CD4-positive, alpha-beta T cell (primary cell): ENCODE measurements at regions of chr6 and their contacts with region 1.

Region 1: GRCh38 chr6:79672631-79673111 is 41.5 kb downstream of the SH3BGRL2 start:
- DNase-seq: peak in 3 of 14 experiments; percentile 20 to 24 (median 23)
- ATAC-seq: peak; percentile 31
- H3K4me3 ChIP-seq: no peak overlapping the region
- H3K4me3 Mint-ChIP-seq: no peak overlapping the region
- H3K27ac ChIP-seq: no peak overlapping the region
- H3K27ac Mint-ChIP-seq: peak overlapping the region; percentile 78
- H3K4me1 ChIP-seq: peaks cover 14% of the 10 kb centered on the region
- H3K4me1 Mint-ChIP-seq: peaks cover 49% of the 10 kb centered on the region
- H3K27me3 ChIP-seq: no peaks in the 10 kb centered on the region
- H3K27me3 Mint-ChIP-seq: no peaks in the 10 kb centered on the region
- CTCF ChIP-seq: peak; percentile 49

Region 2: DNA sequence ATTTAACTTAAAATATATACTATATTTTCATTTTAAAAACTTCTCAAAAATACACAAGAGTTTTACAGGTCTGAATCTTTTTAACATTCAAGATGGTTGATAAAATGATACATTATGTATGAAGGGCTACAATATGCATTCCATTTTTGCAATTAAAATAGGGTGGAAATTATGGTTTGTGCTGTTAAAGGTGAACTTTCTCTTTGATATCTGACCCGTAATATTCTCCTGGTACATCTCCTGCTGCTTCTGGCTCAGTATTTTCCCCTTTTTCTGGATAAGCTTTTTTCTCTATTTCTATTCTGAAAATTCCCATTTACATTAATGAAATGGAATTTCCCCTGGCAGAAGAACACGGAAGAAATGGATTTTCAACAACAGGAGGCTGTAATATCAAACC is 108.0 kb before region 1 on chr6:
- CTCF ChIA-PET with region 1: no interaction called
- POLR2A ChIA-PET with region 1: no interaction called
- intact Hi-C with region 1: loop called in 1 of 2 experiments (anchors 5 kb)
- DNase-seq: no peak
- ATAC-seq: no peak
- H3K4me3 ChIP-seq: no peak overlapping the region
- H3K4me3 Mint-ChIP-seq: no peak overlapping the region
- H3K27ac ChIP-seq: no peak overlapping the region
- H3K27ac Mint-ChIP-seq: no peak overlapping the region
- H3K4me1 ChIP-seq: no peaks in the 10 kb centered on the region
- H3K4me1 Mint-ChIP-seq: no peaks in the 10 kb centered on the region
- H3K27me3 ChIP-seq: no peaks in the 10 kb centered on the region
- H3K27me3 Mint-ChIP-seq: no peaks in the 10 kb centered on the region
- CTCF ChIP-seq: no peak

Region 3: DNA sequence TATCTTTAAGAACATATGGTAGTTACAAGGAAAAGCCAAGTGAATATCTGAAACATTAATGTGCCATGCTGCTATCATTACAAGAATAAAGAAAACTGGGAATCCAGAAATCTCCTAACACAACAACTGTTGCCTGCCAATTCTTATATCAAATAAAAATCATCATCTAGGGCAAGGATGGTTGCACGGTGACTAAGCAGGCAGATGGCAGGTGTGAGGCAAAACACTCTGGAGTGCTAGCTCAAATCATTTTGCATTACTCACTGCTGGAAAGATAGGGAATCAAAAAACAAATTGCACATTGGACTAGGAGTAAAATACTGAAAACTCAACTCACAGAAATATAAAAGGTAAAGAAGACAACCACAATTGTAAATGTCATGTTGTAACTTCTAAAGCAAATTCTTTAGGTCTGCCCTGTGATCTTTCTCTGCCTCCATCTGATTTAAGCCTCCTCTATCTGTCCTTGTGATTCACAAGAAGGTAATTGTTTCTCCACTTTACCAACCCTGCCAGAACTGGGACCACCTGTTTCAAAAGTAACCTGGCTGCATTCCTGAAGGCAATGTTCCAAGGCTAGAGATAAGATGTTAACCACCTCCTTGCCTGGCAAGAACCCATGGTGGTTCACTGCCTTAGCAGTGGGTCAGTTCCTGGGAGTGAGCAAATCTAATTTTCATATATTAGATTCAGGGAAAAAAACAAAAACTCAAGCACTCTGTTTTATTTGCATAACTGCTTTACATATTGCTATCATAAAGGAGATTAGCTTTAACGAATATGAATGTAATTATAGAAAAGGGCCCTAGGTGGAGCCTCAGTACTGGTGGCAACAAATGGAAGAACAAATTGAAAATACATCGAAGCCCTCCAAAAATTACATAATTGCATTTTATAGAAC is 102.3 kb before region 1 on chr6:
- CTCF ChIA-PET with region 1: no interaction called
- POLR2A ChIA-PET with region 1: interaction called, 9 read pairs
- intact Hi-C with region 1: loop called (anchors 5 kb)
- DNase-seq: peak in 3 of 14 experiments; percentile 27 to 46 (median 43)
- ATAC-seq: peak; percentile 57
- H3K4me3 ChIP-seq: no peak overlapping the region
- H3K4me3 Mint-ChIP-seq: no peak overlapping the region
- H3K27ac ChIP-seq: no peak overlapping the region
- H3K27ac Mint-ChIP-seq: no peak overlapping the region
- H3K4me1 ChIP-seq: no peaks in the 10 kb centered on the region
- H3K4me1 Mint-ChIP-seq: peaks cover 5% of the 10 kb centered on the region
- H3K27me3 ChIP-seq: no peaks in the 10 kb centered on the region
- H3K27me3 Mint-ChIP-seq: no peaks in the 10 kb centered on the region
- CTCF ChIP-seq: peak; percentile 74

Region 4: DNA sequence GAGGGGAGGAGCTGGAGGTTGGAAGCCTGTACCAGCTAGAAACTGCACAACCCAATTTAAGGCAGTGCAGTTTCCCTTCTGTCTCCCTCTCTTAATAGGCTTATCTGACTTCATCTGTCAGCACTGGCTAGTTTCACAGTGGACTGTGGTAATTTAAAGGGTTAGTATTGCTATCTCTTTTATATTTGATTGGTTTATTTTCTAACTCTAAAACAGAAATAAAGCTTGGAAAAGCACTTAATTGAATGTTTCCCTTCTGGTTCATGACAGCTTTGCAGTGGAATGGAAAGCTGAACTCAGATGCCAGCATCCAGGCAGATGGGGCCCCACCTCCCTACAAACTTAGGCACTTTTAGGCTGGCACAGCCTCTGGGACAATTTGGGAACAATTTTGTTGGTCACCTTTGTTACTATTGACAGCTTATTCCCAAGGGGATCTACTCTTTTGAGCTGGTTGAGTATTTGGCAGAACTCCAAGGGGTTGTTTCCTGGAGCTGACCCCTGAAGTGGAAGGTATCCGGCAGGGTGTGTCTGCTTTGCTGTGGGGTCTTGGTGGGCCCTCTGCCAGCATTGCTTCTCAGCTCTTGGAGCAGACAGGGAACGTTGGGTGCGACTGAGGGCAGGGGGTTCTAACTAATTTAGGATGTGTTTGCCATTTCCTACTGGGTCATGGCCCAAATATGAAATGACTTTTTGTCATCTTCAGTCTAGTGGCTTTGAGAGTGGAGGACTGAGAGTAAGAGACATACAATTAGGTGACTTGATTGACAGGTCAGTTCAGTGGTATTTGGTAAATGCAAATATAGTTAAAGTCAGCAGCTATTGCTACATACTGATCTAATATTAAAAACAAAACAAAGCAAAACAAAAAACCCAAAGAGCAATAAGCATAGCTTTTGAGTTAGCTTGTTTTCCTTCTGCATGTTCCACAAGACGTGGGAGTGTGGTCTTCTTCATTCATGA is 32.2 kb before region 1 on chr6:
- CTCF ChIA-PET with region 1: no interaction called
- POLR2A ChIA-PET with region 1: interaction called, 3 read pairs
- intact Hi-C with region 1: loop called in 1 of 2 experiments (anchors 5 kb)
- DNase-seq: no peak
- ATAC-seq: no peak
- H3K4me3 ChIP-seq: no peak overlapping the region
- H3K4me3 Mint-ChIP-seq: no peak overlapping the region
- H3K27ac ChIP-seq: no peak overlapping the region
- H3K27ac Mint-ChIP-seq: no peak overlapping the region
- H3K4me1 ChIP-seq: no peaks in the 10 kb centered on the region
- H3K4me1 Mint-ChIP-seq: no peaks in the 10 kb centered on the region
- H3K27me3 ChIP-seq: peaks cover 0 to 6% of the 10 kb centered on the region in 2 experiments
- H3K27me3 Mint-ChIP-seq: peaks cover 16% of the 10 kb centered on the region
- CTCF ChIP-seq: no peak